ENCODE measurements at regions of chr20 and their contacts with region 1.

Region 1: DNA sequence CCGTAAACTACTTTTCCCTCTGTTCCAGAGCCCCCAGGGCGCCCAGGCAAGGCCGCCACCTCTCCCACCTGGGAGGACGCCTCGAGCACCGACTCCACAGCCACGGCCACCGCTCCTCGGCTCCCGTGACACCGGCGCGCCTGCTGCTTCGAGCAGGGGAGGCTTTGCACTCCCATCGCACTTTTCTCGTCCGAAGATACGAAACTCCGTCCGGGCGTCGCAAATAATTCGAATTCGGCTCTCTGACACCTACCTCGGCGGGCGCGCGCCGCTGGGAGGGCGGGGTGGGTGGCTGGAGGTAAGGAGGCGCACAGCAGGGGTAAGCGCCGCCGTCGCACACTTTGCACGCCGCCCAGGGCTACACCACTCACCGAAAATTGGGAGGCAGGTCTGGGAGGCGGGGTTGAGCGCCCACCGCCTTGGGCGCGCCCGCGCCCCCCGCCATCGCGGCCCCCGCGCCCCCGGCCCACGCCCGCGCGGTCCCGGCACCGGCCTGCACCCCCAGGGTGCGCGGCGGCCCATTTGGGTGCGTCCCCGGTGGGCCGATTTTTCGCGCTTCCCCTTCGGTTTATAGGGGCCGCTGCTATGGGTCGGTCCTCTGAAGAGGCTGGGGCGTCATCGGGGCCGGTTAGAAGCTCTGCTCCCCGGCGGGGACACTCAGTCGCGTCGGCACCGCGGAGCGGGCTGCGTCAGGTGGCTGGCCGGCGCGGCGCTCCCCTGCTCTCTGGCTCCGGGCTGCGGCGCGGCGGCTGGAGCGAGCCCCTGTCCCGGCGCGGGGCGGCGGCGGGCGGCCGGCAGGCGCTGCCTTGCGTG is 36.2 kb downstream of the GNAS start:
- DNase-seq: peak; percentile 79 to 91
- ATAC-seq: peak; percentile 51 to 82 (median 68)
- H3K4me3 ChIP-seq: peak overlapping the region; percentile 86
- H3K4me3 Mint-ChIP-seq: peak overlapping the region; percentile 84
- H3K27ac ChIP-seq: peak overlapping the region; percentile 69
- H3K27ac Mint-ChIP-seq: peak overlapping the region; percentile 80 to 90
- H3K4me1 ChIP-seq: peaks cover 11% of the 10 kb centered on the region
- H3K4me1 Mint-ChIP-seq: peaks cover 15 to 24% of the 10 kb centered on the region in 2 donors
- H3K27me3 ChIP-seq: no peaks in the 10 kb centered on the region
- H3K27me3 Mint-ChIP-seq: no peaks in the 10 kb centered on the region
- CTCF ChIP-seq: no peak

Region 2: GRCh38 chr20:58650776-58651558 is 237.8 kb before region 1 on chr20 and contains the start of gene STX16:
- intact Hi-C with region 1: loop called (anchors 5 kb)
- DNase-seq: peak; percentile 78 to 95
- ATAC-seq: peak; percentile 68 to 84 (median 79)
- H3K4me3 ChIP-seq: peak within 1 kb of the TSS; percentile 91
- H3K4me3 Mint-ChIP-seq: peak within 1 kb of the TSS; percentile 97
- H3K27ac ChIP-seq: peak within 1 kb of the TSS; percentile 81
- H3K27ac Mint-ChIP-seq: peak within 1 kb of the TSS; percentile 94 to 98
- H3K4me1 ChIP-seq: peaks cover 14% of the 10 kb centered on the region
- H3K4me1 Mint-ChIP-seq: peaks cover 33 to 36% of the 10 kb centered on the region in 2 donors
- H3K27me3 ChIP-seq: no peaks in the 10 kb centered on the region
- H3K27me3 Mint-ChIP-seq: no peaks in the 10 kb centered on the region
- CTCF ChIP-seq: peak; percentile 62
- total RNA-seq, gene STX16: 136 to 146 (median 143) TPM

Region 3: GRCh38 chr20:58907399-58908137 is 18.8 kb after region 1 on chr20:
- intact Hi-C with region 1: loop called (anchors 1 kb)
- DNase-seq: peak; percentile 64 to 86
- ATAC-seq: peak; percentile 86 to 89 (median 89)
- H3K4me3 ChIP-seq: peak overlapping the region; percentile 8
- H3K4me3 Mint-ChIP-seq: peak overlapping the region; percentile 88
- H3K27ac ChIP-seq: peak overlapping the region; percentile 80
- H3K27ac Mint-ChIP-seq: peak overlapping the region; percentile 89 to 96
- H3K4me1 ChIP-seq: peaks cover 29% of the 10 kb centered on the region
- H3K4me1 Mint-ChIP-seq: peaks cover 42 to 47% of the 10 kb centered on the region in 2 donors
- H3K27me3 ChIP-seq: no peaks in the 10 kb centered on the region
- H3K27me3 Mint-ChIP-seq: no peaks in the 10 kb centered on the region
- CTCF ChIP-seq: no peak

Region 4: GRCh38 chr20:58980700-58981627 is 92.2 kb after region 1 on chr20 and contains the start of gene NELFCD:
- intact Hi-C with region 1: loop called (anchors 1 kb)
- DNase-seq: peak; percentile 87 to 95
- ATAC-seq: peak; percentile 86 to 94 (median 87)
- H3K4me3 ChIP-seq: peak within 1 kb of the TSS; percentile 89
- H3K4me3 Mint-ChIP-seq: peak within 1 kb of the TSS; percentile 77
- H3K27ac ChIP-seq: peak within 1 kb of the TSS; percentile 66
- H3K27ac Mint-ChIP-seq: peak within 1 kb of the TSS; percentile 70 to 87
- H3K4me1 ChIP-seq: peaks cover 33% of the 10 kb centered on the region
- H3K4me1 Mint-ChIP-seq: peaks cover 21 to 29% of the 10 kb centered on the region in 2 donors
- H3K27me3 ChIP-seq: no peaks in the 10 kb centered on the region
- H3K27me3 Mint-ChIP-seq: no peaks in the 10 kb centered on the region
- CTCF ChIP-seq: no peak
- total RNA-seq, gene NELFCD: 75.7 to 105 (median 92.6) TPM

Region 5: GRCh38 chr20:59042796-59043660 is 154.3 kb after region 1 on chr20:
- intact Hi-C with region 1: loop called (anchors 2 kb)
- DNase-seq: peak; percentile 93 to 97
- ATAC-seq: peak; percentile 93 to 99 (median 96)
- H3K4me3 ChIP-seq: peak overlapping the region; percentile 70
- H3K4me3 Mint-ChIP-seq: peak overlapping the region; percentile 91
- H3K27ac ChIP-seq: peak overlapping the region; percentile 85
- H3K27ac Mint-ChIP-seq: peak overlapping the region; percentile 84 to 87
- H3K4me1 ChIP-seq: peaks cover 28% of the 10 kb centered on the region
- H3K4me1 Mint-ChIP-seq: peaks cover 33 to 35% of the 10 kb centered on the region in 2 donors
- H3K27me3 ChIP-seq: no peaks in the 10 kb centered on the region
- H3K27me3 Mint-ChIP-seq: peaks cover 0 to 3% of the 10 kb centered on the region in 2 donors
- CTCF ChIP-seq: no peak

Region 6: DNA sequence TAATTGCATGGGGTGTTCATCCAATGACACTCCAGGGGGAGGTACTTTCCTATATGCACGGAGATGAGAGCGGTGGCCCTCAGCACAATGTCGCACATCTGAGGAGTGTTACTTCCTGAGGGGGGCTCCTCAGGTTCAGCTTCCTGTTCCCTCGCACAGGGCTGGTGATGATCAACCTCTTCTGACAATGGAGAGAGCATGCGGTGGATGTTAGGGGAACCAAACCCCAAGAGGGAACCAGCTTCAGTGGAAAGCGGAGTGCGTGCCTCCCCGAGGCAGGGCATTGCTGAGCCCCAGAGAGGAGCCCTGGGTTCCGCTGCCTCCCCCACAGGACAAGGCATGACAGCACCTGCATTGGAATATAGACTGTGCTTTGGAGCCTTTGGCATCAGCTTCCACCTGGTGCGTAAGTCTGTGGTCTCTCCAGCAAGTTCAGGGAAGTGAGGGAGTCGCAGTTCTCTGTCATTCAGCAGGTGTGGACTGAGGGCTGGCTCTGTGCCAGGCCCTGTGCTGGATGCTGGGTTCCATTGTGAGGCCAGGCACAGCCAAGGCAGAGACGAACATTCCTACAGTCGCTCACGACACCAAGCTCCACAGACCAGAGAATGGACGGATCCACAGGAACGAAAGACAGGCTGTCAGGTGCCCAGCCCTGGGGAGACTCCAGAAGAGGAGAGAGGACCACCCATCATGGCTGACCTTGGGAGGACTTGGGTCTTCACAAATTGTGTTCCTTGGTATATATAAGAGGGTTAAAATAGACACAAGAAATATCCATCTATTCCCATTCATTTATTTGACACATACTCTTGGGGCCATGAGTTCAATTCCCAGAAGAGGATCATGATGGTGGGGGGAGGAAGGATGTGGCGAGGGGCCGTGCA is 271.0 kb after region 1 on chr20:
- intact Hi-C with region 1: loop called (anchors 10 kb)
- DNase-seq: peak; percentile 75 to 94
- ATAC-seq: peak; percentile 88 to 96 (median 95)
- H3K4me3 ChIP-seq: peak overlapping the region; percentile 46
- H3K4me3 Mint-ChIP-seq: peak overlapping the region; percentile 94
- H3K27ac ChIP-seq: peak overlapping the region; percentile 100
- H3K27ac Mint-ChIP-seq: peak overlapping the region; percentile 100
- H3K4me1 ChIP-seq: peaks cover 43% of the 10 kb centered on the region
- H3K4me1 Mint-ChIP-seq: peaks cover 64 to 76% of the 10 kb centered on the region in 2 donors
- H3K27me3 ChIP-seq: no peaks in the 10 kb centered on the region
- H3K27me3 Mint-ChIP-seq: peaks cover 2 to 6% of the 10 kb centered on the region in 2 donors
- CTCF ChIP-seq: no peak